ENCODE measurements at regions of chr11 and their contacts with region 1.

Region 1: DNA sequence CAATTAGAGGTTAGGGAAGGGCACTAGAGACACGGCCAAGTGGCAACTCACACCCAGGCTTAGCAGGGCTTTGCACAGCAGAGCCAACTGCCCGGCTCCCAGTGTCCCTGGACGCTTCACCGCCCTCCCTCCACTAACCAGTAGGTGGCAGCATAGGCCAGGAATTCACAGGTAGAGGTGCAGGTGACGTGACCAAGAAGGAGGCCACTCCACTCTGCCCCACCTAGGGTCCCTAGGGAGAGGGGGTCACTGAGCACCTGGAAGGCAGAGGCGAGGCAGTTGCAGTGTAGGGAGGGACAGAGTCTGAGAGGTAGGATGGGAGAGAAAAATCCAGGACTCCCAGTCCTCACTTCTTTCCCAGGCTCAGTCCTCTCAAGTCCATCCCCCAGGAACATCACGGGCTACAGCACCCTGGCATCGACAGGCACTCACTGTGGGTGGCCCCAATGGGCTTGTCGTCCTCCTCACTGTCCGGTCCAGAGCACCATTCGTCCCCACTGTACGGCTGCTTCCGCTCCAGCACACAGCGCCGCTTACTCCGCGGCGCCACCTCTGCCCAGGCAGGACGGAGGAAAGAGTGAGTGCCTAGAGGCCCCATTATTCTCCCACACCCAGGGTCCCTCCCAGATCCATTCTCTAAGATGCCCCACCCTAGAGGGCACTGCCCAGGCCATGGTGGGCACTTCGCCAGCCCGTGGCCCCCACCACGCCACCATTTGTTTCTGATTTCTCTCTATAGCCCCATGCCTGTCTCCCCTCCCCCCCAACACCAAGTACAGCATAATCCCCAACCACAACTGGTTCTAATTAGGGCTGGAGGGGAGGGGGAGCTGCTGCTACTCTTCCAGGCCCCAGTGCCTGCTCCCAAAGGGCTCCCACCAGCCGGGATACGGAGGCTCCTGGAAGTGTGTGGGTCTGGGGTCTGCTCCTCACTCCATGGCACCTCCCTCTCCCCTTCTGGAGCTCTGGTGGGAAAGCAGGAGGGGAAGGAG is 18.4 kb downstream of the BCL9L start:
- DNase-seq: peak; percentile 69
- H3K4me3 ChIP-seq: no peak overlapping the region
- H3K27ac ChIP-seq: no peak overlapping the region
- H3K4me1 ChIP-seq: peaks cover 43% of the 10 kb centered on the region
- H3K27me3 ChIP-seq: no peaks in the 10 kb centered on the region
- CTCF ChIP-seq: peak; percentile 88 to 92

Region 2: GRCh38 chr11:118851970-118852369 is 55.4 kb before region 1 on chr11:
- CTCF ChIA-PET with region 1: no interaction called
- dilution Hi-C with region 1: no loop called
- in situ Hi-C with region 1: no loop called
- intact Hi-C with region 1: no loop called
- DNase-seq: no peak
- H3K4me3 ChIP-seq: no peak overlapping the region
- H3K27ac ChIP-seq: no peak overlapping the region
- H3K4me1 ChIP-seq: no peaks in the 10 kb centered on the region
- H3K27me3 ChIP-seq: no peaks in the 10 kb centered on the region
- CTCF ChIP-seq: no peak

Region 3: GRCh38 chr11:119315131-119316015 is 408.0 kb after region 1 on chr11:
- CTCF ChIA-PET with region 1: no interaction called
- dilution Hi-C with region 1: no loop called
- in situ Hi-C with region 1: no loop called
- intact Hi-C with region 1: loop called (anchors 5 kb)
- DNase-seq: peak; percentile 56
- H3K4me3 ChIP-seq: peak overlapping the region; percentile 37 to 52 (median 48)
- H3K27ac ChIP-seq: no peak overlapping the region
- H3K4me1 ChIP-seq: peaks cover 67% of the 10 kb centered on the region
- H3K27me3 ChIP-seq: no peaks in the 10 kb centered on the region
- CTCF ChIP-seq: no peak